ENCODE measurements at regions of chr13 and their contacts with region 1.

Region 1: DNA sequence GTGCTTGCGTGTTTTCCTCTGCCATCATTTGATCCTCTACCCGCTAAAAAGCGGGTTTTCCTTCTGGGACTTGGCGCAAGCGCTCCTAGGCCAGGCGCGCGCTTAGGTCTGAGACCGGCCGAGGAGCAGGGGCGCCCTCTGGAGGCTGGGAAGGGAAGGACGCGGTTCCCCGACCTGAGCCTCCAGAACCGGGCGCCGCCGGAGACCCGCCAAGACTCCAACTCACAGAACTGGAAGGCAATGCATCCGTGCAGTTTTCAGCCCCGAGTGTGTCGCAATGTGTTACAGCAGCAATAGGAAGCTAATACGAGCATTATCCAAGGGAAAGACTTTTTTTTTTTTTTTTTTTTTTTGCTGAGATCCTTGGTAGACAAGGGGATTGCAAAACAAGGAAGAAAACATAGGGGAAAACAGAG is 190.9 kb downstream of the COL4A1 start:
- DNase-seq: peak in 8 of 9 donors; percentile 6 to 67 (median 24)
- ATAC-seq: peak; percentile 63
- H3K4me3 ChIP-seq: no peak overlapping the region
- H3K4me3 Mint-ChIP-seq: peak overlapping the region in 1 of 10 donors; percentile 48
- H3K27ac ChIP-seq: no peak overlapping the region
- H3K27ac Mint-ChIP-seq: peak overlapping the region in 1 of 9 donors; percentile 5
- H3K4me1 ChIP-seq: no peaks in the 10 kb centered on the region
- H3K4me1 Mint-ChIP-seq: peaks cover 0 to 3% (median 0%) of the 10 kb centered on the region in 7 donors
- H3K27me3 ChIP-seq: no peaks in the 10 kb centered on the region
- H3K27me3 Mint-ChIP-seq: peaks cover 12 to 59% (median 36%) of the 10 kb centered on the region in 5 donors

Region 2: GRCh38 chr13:109145631-109146030 is 970.4 kb before region 1 on chr13:
- CTCF ChIA-PET with region 1: no interaction called
- POLR2A ChIA-PET with region 1: no interaction called
- intact Hi-C with region 1: loop called in 1 of 2 experiments (anchors 2 kb)
- DNase-seq: peak in 4 of 9 donors; percentile 10 to 17 (median 14)
- ATAC-seq: peak; percentile 61
- H3K4me3 ChIP-seq: no peak overlapping the region
- H3K4me3 Mint-ChIP-seq: no peak overlapping the region
- H3K27ac ChIP-seq: no peak overlapping the region
- H3K27ac Mint-ChIP-seq: no peak overlapping the region
- H3K4me1 ChIP-seq: no peaks in the 10 kb centered on the region
- H3K4me1 Mint-ChIP-seq: peaks cover 0 to 2% (median 0%) of the 10 kb centered on the region in 7 donors
- H3K27me3 ChIP-seq: peaks cover 0 to 6% of the 10 kb centered on the region in 2 donors
- H3K27me3 Mint-ChIP-seq: peaks cover 20 to 51% (median 47%) of the 10 kb centered on the region in 5 donors

Region 3: DNA sequence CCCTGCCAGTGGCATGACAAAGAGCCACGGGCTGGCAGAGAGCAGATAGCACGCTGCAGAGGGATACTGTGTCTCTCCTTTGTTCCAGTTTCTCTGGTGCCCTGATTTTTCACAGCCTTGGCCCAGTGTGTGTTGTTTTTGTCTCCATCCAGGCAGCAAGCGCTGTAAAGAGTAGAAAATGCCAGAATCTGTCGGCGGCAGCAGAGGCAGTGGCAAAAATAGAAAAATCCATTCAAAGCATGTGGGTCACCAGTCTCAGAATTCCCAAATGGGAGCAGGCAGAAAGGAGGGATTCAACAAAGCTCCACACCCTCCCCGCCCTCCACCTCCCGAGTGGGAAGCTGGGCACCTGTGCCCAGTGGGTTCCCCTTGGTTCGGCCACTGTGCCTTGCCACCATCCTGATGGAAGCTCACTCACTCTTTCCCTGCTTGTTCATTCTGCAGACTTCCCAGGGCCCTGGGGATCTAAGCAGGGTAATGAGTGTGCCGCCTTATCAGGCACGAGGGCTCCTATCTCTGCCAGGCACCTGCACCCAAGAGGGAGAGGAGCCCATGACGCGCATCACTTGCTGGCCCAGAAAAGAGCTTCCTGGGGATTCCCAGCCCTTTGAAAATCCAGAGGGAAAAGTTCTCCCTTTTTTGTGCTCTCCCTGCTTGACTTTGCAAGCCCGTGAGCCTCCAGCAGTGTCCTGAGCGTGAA is 746.6 kb before region 1 on chr13:
- CTCF ChIA-PET with region 1: no interaction called
- POLR2A ChIA-PET with region 1: no interaction called
- intact Hi-C with region 1: loop called in 1 of 2 experiments (anchors 5 kb)
- DNase-seq: no peak
- ATAC-seq: no peak
- H3K4me3 ChIP-seq: no peak overlapping the region
- H3K4me3 Mint-ChIP-seq: no peak overlapping the region
- H3K27ac ChIP-seq: no peak overlapping the region
- H3K27ac Mint-ChIP-seq: no peak overlapping the region
- H3K4me1 ChIP-seq: no peaks in the 10 kb centered on the region
- H3K4me1 Mint-ChIP-seq: peaks cover 0 to 2% (median 0%) of the 10 kb centered on the region in 7 donors
- H3K27me3 ChIP-seq: no peaks in the 10 kb centered on the region
- H3K27me3 Mint-ChIP-seq: peaks cover 0 to 25% (median 0%) of the 10 kb centered on the region in 5 donors